ENCODE measurements at regions of chr10 and their contacts with region 1.

Region 1: GRCh38 chr10:55263327-55263726 is 462.3 kb upstream of the PCDH15 start:
- DNase-seq: no peak
- ATAC-seq: no peak; the same call in 1 of the 2 replicates
- H3K4me3 ChIP-seq: no peak overlapping the region
- H3K27ac ChIP-seq: no peak overlapping the region
- H3K4me1 ChIP-seq: no peaks in the 10 kb centered on the region
- H3K27me3 ChIP-seq: no peaks in the 10 kb centered on the region
- CTCF ChIP-seq: no peak

Region 2: GRCh38 chr10:54985732-54986131 is 277.6 kb before region 1 on chr10:
- CTCF ChIA-PET with region 1: no interaction called
- POLR2A ChIA-PET with region 1: no interaction called
- in situ Hi-C with region 1: no loop called
- intact Hi-C with region 1: loop called (anchors 5 kb)
- DNase-seq: no peak
- ATAC-seq: no peak
- H3K4me3 ChIP-seq: no peak overlapping the region
- H3K27ac ChIP-seq: no peak overlapping the region
- H3K4me1 ChIP-seq: no peaks in the 10 kb centered on the region
- H3K27me3 ChIP-seq: no peaks in the 10 kb centered on the region
- CTCF ChIP-seq: peak; percentile 49; the same call in 1 of the 2 replicates

Region 3: DNA sequence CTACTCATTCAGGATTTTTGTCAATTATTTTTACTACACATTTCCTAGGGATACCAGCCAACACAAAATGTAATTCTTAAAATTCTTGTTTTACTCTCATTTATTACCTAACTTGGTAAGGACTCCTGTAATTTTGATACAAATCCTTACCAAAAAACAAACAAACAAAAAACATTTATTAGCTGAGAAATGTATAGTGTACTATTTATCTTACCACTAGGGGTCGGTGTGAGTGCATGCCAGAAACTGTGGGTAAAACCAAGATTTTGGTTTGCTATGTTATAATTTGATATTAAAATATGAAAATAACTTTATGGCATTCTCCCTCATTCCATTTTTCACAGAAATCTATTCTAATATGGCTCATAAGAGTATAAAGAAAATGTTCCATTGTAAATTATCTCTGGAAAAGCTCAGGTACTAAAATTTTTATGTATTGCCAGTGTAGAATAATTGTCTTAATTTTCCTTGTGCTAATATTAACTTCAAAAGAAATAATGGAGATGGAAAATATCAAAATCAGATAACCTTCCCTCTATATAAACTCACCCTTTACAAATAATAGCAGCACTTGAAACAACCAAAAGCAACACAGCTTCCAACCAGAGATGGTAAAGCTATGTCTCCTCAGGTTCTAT is 171.5 kb before region 1 on chr10:
- CTCF ChIA-PET with region 1: no interaction called
- POLR2A ChIA-PET with region 1: no interaction called
- in situ Hi-C with region 1: no loop called
- intact Hi-C with region 1: loop called (anchors 5 kb)
- DNase-seq: no peak
- ATAC-seq: no peak
- H3K4me3 ChIP-seq: no peak overlapping the region
- H3K27ac ChIP-seq: no peak overlapping the region
- H3K4me1 ChIP-seq: no peaks in the 10 kb centered on the region
- H3K27me3 ChIP-seq: no peaks in the 10 kb centered on the region
- CTCF ChIP-seq: peak; percentile 82; the same call in 1 of the 2 replicates

Region 4: DNA sequence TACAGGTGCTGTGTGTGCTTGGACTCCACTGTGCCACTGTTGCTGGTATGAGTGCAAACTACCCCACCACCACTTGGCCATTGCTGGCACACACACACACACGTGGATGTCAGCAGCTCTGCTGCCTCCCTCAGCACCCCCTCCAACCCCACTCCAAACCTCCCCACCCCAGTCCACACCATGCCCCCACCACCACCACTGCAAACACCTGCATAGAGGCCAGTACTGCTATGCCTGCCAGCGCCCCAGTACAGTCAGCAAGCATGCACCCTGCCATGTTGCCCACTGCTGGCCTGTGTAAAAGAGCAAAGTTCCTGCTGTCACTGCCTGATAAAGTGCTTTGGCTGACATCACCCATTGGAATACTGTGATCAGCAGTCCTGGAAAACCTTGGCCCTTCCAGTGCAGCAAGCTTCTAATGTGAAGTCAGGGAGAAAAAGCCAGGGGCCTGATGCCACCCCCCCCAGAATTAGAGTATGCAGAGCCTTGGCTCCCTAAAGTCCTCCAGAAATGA is 56.9 kb after region 1 on chr10:
- CTCF ChIA-PET with region 1: no interaction called
- POLR2A ChIA-PET with region 1: no interaction called
- in situ Hi-C with region 1: no loop called
- intact Hi-C with region 1: no loop called
- DNase-seq: no peak
- ATAC-seq: no peak
- H3K4me3 ChIP-seq: no peak overlapping the region
- H3K27ac ChIP-seq: no peak overlapping the region
- H3K4me1 ChIP-seq: no peaks in the 10 kb centered on the region
- H3K27me3 ChIP-seq: no peaks in the 10 kb centered on the region
- CTCF ChIP-seq: no peak